Activated CD4-positive, alpha-beta memory T cell treated with anti-CD3 and anti-CD28 coated beads for 36 hours (primary cell): ENCODE measurements at regions of chr10 and their contacts with region 1.

Region 1: DNA sequence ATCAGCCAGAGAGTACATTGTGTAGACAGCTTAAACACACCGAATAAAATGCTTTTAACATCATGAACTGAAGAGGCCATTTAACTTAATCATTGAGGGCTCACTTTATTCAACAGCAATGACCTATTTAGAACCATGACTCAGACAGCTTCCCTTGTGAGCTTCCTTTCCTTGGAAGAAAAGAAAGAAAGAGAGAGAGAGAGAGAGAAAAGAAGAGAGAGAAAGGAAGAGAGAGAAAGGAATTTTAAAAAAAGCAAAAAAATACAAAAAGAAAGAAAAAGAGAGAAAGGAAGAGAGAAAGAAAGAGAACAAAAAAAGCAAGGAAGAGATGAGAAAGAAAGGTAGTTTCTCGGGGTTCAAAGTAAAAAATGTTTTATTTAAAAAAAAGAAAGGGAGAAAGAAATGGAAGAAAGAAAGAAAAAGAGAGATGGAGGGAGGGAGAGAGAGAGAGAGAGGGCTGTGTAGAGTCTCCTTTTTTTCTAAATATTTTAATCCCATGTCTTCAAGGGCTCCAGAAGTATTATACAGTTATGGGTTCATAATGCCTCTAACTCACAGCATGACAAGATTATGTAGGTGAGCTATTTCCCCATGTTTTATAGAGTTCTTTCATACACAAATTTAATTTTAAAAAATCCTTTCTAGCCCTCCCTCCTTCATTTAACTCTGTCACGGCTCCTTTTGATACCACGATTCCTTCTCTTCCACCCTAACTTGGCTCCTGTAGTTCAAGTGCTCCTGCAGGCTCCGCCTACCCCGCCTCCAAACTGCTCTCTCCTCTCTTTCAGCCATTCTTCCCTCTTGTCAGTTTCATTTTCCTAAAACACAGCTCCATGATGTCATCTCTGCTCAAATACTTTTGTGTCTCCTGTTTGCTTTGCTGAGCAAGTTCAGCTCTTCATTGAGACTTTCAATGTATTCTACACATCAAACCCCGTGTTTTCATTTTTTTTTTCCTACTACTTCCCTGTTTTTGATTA is 85.5 kb downstream of the PRTFDC1 start:
- DNase-seq: no peak
- H3K4me3 Mint-ChIP-seq: no peak overlapping the region
- H3K27ac Mint-ChIP-seq: no peak overlapping the region
- H3K4me1 Mint-ChIP-seq: peaks cover 26% of the 10 kb centered on the region
- H3K27me3 Mint-ChIP-seq: peaks cover 2% of the 10 kb centered on the region

Region 2: GRCh38 chr10:24822590-24822989 is 44.3 kb before region 1 on chr10:
- CTCF ChIA-PET with region 1: interaction called, 3 read pairs
- POLR2A ChIA-PET with region 1: no interaction called
- intact Hi-C with region 1: loop called (anchors 5 kb)
- DNase-seq: peak; percentile 52
- H3K4me3 Mint-ChIP-seq: no peak overlapping the region
- H3K27ac Mint-ChIP-seq: no peak overlapping the region
- H3K4me1 Mint-ChIP-seq: peaks cover 36% of the 10 kb centered on the region
- H3K27me3 Mint-ChIP-seq: no peaks in the 10 kb centered on the region

Region 3: DNA sequence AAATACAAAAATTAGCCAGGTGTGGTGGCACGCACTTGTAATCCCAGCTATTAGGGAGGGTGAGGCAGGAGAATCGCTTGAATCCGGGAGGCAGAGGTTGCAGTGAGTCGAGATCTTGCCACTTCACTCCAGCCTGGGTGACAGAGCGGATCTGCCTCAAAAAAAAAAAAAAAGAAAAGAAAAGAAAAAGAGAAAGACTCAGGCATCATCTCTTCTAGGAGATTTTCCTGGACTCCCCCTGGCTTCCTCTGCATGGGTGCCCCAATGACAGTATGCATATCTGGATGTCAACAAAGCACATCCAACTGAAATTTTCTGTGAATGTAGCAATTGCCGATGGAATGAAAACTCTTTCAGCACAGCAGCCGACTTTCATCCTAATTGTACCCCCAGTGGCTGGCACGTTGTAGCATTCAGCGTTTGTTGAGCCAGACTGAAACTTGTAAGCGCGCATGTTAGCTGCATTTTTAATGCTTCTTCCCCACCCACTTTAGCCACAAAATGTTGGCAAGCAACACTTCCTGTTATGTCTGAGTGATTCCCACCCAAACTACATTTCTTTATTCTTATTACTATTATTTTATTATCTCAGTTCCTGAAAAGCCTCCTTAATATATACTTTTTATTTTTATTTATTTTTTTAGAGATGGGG is 15.3 kb after region 1 on chr10:
- CTCF ChIA-PET with region 1: interaction called, 3 read pairs
- POLR2A ChIA-PET with region 1: no interaction called
- intact Hi-C with region 1: loop called (anchors 2 kb)
- DNase-seq: peak; percentile 66
- H3K4me3 Mint-ChIP-seq: peak overlapping the region; percentile 57
- H3K27ac Mint-ChIP-seq: peak overlapping the region; percentile 62
- H3K4me1 Mint-ChIP-seq: peaks cover 30% of the 10 kb centered on the region
- H3K27me3 Mint-ChIP-seq: no peaks in the 10 kb centered on the region